Mammary epithelial cell (primary cell): ENCODE measurements at regions of chr15 and their contacts with region 1.

Region 1: DNA sequence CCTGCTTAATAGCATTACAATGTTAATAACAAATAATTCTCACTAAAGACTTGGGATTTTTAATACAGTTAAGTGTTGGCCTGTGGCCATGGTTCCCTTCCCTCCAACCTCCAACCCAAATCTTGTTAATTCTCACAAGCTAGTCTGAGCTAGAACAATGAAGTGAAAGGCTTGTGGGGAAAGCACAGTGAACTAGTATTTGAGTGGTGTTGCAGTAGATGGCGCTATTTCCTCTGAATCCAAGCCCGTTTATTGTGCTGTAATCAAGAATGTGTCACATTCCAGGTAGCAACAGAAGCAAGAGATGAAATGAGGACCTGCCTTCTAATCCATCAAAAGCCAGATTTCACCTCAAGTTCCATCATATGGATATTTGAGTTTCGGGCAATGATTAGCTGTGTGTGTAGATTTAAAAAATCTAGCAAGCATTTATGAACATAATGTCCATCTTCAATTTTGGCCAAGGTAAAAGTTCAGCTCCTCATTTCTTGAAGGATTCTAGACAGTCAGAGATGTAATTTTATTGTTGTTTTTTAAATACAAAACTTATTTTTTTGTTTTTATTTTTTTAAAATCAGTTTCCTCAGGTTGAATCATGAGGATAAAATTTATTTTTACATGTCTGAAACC is 160.7 kb downstream of the SQOR start:
- DNase-seq: peak; percentile 55
- H3K4me3 ChIP-seq: no peak overlapping the region
- H3K27ac ChIP-seq: no peak overlapping the region
- H3K4me1 ChIP-seq: no peaks in the 10 kb centered on the region
- H3K27me3 ChIP-seq: no peaks in the 10 kb centered on the region
- CTCF ChIP-seq: peak; percentile 75 to 82

Region 2: GRCh38 chr15:45970542-45970941 is 175.0 kb after region 1 on chr15:
- CTCF ChIA-PET with region 1: no interaction called
- dilution Hi-C with region 1: no loop called
- in situ Hi-C with region 1: no loop called
- intact Hi-C with region 1: loop called (anchors 10 kb)
- DNase-seq: no peak
- H3K4me3 ChIP-seq: no peak overlapping the region
- H3K27ac ChIP-seq: no peak overlapping the region
- H3K4me1 ChIP-seq: no peaks in the 10 kb centered on the region
- H3K27me3 ChIP-seq: peaks cover 2% of the 10 kb centered on the region
- CTCF ChIP-seq: no peak

Region 3: DNA sequence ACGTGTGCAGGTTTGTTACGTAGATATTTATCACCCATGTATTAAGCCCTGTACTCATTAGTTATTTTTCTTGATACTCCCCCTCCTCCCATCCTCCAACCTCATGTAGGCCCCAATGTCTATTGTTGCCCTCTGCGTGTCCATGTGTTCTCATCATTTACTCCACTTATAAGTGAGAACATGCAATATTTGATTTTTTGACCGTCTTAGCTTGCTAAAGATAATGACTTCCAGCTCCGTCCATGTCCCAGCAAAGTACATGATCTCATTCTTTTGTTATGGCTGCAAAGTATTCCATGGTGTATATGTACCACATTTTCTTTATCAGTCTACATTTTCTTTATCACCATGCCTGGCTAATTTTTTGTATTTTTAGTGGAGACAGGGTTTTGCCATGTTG is 462.5 kb after region 1 on chr15:
- CTCF ChIA-PET with region 1: interaction called, 11 read pairs
- dilution Hi-C with region 1: no loop called
- in situ Hi-C with region 1: no loop called
- intact Hi-C with region 1: no loop called
- DNase-seq: no peak
- H3K4me3 ChIP-seq: no peak overlapping the region
- H3K27ac ChIP-seq: no peak overlapping the region
- H3K4me1 ChIP-seq: no peaks in the 10 kb centered on the region
- H3K27me3 ChIP-seq: no peaks in the 10 kb centered on the region
- CTCF ChIP-seq: no peak

Region 4: GRCh38 chr15:46312133-46312740 is 516.7 kb after region 1 on chr15:
- CTCF ChIA-PET with region 1: interaction called, 5 read pairs
- dilution Hi-C with region 1: no loop called
- in situ Hi-C with region 1: no loop called
- intact Hi-C with region 1: loop called (anchors 2 kb)
- DNase-seq: peak; percentile 27
- H3K4me3 ChIP-seq: no peak overlapping the region
- H3K27ac ChIP-seq: no peak overlapping the region
- H3K4me1 ChIP-seq: no peaks in the 10 kb centered on the region
- H3K27me3 ChIP-seq: no peaks in the 10 kb centered on the region
- CTCF ChIP-seq: peak; percentile 68 to 81